ENCODE measurements at regions of chr2 and their contacts with region 1.

Region 1: DNA sequence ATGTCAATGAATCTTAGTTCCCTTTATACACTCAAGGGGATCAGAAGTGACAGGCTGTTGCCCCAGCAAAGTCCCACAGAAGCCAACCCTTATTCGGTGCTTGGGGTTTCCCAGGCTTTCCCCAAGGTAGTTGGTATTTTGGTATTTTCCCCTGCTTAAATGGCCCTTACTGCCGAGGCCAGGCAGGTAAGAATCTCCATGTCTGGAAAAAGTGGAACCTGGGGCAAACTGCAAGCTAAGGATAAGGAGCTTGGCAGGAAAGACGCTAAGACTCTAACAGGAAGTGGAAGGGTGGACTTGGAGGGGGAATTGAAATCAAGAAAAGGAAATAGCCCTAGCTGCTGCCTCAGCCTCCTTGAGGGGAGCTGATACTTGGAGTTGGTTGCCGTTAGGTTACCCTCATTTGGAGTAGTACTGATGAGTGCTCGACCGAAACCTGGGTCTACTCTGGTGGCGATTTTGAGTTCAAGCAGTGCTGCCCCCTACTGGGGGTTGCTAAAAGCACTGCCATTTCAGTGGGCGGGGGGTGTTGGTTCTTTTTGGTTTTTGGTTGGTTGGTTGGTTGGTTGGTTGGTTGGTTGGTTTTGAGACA is 3.3 kb upstream of the GPBAR1 start:
- DNase-seq: no peak
- ATAC-seq: no peak

Region 2: DNA sequence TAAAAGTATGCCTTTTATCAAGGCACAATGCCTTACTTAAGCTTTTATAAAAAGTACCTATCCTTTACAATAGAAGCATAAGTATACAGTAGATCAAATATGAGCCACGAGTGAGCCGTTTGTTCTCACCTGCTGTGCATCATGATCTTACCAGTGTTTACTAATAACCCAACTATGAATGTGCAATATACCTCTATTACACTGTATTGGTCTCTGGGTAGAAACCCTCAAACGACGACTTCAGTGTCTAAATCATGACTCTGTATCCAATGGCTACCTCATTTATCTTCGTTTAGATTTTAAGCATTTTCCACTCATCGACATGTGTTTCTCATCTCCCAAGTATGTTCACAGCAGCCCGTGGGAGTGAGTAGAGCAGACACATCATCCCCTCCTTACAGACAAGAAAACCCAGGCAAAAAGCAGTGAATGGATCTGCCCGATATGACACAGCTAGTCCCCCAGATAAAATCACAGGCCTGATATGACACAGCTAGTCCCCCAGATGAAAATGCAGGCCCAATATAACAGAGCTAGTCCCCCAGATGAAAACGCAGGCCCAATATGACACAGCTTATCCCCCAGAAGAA is 534.5 kb before region 1 on chr2:
- intact Hi-C with region 1: no loop called
- DNase-seq: no peak
- ATAC-seq: no peak

Region 3: GRCh38 chr2:218216674-218217359 is 40.7 kb before region 1 on chr2 and contains the start of gene ARPC2:
- intact Hi-C with region 1: loop called (anchors 5 kb)
- DNase-seq: peak; percentile 98
- ATAC-seq: peak; percentile 98
- total RNA-seq, gene ARPC2: 142 TPM

Region 4: DNA sequence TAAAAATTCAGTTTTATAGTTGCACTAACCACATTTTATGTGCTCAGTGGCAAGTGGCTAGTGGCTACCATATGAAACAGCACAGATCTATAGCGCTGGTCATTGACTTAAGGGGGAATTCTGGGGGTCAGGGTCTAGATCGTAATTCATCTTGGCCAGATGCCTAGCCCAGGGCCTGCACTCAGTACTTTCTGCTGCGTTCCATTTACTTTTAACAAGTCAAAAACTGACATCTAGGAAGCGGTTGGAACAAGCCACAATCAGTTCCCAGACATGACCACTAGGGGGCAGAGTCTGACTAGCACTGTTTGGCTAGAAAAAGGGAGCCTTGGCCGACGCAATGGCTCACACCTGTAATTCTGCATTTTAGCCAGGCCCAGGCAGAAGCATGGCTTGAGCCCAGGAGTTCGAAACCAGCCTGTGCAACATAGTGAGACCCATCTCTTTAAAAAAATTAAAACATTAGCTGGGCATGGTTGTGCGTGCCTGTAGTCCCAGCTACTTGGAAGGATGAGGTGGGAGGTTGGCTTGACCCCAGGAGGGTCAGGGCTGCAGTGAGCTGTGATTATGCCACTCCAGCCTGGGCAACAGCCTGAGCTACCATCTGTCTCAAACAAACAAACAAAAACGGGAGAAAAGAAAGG is 43.8 kb after region 1 on chr2:
- intact Hi-C with region 1: no loop called
- DNase-seq: peak; percentile 84
- ATAC-seq: peak; percentile 65

Measured in Right ventricle myocardium inferior (tissue), 1 donor.